Activated naive CD4-positive, alpha-beta T cell treated with anti-CD3 and anti-CD28 coated beads for 36 hours (primary cell): ENCODE measurements at regions of chr11 and their contacts with region 1.

Region 1: DNA sequence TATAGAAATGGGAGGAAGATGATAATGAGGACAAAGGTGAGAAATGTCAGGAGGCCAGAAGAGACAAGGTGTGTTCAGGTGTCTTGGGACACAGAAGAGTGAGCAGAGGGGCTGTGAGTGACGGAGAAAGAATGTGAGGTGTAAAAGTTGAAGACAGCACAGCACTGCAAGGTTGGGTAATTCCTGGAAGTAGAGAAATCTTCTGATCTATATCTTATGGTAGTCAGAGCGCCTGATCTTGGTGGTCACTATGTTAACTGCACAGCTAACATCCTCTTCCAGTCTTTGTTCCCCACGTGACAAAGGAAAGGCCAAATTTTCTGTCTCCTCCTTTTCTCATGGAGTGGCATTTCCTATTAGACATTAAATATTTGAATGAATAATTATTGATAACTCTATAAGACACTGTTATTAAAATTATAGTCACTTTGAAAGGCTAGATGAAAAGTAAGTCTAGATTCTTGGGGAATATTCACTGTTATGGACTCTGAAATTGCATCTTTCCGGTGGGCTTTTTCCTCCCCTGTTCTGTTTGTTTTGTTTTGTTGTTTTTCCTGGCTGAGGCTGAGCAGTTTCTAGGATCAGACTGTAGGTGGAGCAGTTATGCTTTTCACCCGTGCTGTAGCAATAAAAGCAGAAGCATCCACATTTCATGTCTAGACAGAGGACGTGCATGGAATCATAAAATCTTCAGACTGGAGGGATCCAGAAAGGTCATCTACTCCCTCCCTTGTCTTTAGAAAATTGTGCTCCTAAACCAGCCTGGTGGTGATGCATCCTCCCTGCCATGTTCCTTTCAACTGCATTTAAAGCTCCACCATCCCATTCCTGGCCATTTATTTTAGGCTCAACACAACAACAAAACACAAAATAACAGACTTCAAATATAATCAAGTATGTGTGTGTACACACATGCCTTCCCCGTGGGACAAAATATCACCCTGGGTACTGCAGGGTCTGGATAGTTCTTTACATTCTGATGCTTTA is 26.6 kb downstream of the SC5D start:
- DNase-seq: peak; percentile 40
- H3K4me3 Mint-ChIP-seq: no peak overlapping the region
- H3K27ac Mint-ChIP-seq: no peak overlapping the region
- H3K4me1 Mint-ChIP-seq: peaks cover 13% of the 10 kb centered on the region
- H3K27me3 Mint-ChIP-seq: no peaks in the 10 kb centered on the region

Region 2: DNA sequence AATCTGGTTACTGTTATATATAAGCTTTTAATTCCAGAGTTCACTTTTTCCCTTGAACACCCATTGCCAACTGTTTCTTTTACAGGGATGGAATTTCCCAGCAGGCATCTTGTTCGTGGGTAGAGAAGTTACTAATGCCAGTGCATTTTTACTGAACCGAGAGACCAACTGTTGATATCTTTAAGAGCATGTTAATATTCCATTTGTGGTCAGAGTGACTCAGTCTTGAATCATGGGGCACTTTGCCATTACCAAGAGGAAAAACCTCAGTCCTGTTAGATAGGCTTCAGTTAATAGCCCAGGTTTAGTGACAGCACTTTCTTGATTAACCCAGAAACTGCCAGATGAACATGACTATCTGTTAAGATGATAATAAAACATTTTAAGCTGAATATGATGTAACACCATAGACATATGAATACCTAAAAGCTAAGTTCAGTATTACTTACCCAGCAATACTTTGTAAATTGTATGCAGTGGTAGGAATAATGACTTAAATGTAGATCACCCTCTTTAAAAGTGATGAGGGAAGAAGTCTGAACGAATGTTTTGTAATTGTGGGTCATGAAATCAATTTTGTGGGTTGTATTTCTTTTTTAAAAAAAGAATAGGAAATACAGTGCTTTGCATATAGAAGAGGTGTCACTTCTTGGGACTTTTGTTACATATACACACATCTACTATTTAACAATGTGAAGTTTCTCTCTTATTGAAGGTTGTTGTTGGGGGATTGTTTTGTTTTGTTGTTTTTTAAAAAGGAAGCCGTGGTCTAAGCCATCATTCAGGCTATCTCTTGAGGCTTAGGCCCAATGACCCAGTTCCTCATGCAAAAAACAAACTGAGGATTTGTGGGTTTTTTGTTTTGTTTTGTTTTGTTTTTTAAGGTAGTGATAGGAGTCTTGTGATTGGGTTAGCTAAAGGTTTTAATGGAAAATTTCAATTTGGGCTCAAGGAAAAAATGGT is 886.8 kb before region 1 on chr11:
- CTCF ChIA-PET with region 1: no interaction called
- intact Hi-C with region 1: no loop called
- DNase-seq: peak; percentile 30
- H3K4me3 Mint-ChIP-seq: no peak overlapping the region
- H3K27ac Mint-ChIP-seq: peak overlapping the region; percentile 57
- H3K4me1 Mint-ChIP-seq: peaks cover 17% of the 10 kb centered on the region
- H3K27me3 Mint-ChIP-seq: no peaks in the 10 kb centered on the region

Region 3: GRCh38 chr11:120710354-120711131 is 608.6 kb before region 1 on chr11:
- CTCF ChIA-PET with region 1: no interaction called
- intact Hi-C with region 1: no loop called
- DNase-seq: no peak
- H3K4me3 Mint-ChIP-seq: no peak overlapping the region
- H3K27ac Mint-ChIP-seq: no peak overlapping the region
- H3K4me1 Mint-ChIP-seq: peaks cover 5% of the 10 kb centered on the region
- H3K27me3 Mint-ChIP-seq: peaks cover 3% of the 10 kb centered on the region

Region 4: GRCh38 chr11:121249039-121249663 is 70.0 kb before region 1 on chr11:
- CTCF ChIA-PET with region 1: no interaction called
- intact Hi-C with region 1: loop called (anchors 5 kb)
- DNase-seq: no peak
- H3K4me3 Mint-ChIP-seq: no peak overlapping the region
- H3K27ac Mint-ChIP-seq: no peak overlapping the region
- H3K4me1 Mint-ChIP-seq: no peaks in the 10 kb centered on the region
- H3K27me3 Mint-ChIP-seq: no peaks in the 10 kb centered on the region

Region 5: DNA sequence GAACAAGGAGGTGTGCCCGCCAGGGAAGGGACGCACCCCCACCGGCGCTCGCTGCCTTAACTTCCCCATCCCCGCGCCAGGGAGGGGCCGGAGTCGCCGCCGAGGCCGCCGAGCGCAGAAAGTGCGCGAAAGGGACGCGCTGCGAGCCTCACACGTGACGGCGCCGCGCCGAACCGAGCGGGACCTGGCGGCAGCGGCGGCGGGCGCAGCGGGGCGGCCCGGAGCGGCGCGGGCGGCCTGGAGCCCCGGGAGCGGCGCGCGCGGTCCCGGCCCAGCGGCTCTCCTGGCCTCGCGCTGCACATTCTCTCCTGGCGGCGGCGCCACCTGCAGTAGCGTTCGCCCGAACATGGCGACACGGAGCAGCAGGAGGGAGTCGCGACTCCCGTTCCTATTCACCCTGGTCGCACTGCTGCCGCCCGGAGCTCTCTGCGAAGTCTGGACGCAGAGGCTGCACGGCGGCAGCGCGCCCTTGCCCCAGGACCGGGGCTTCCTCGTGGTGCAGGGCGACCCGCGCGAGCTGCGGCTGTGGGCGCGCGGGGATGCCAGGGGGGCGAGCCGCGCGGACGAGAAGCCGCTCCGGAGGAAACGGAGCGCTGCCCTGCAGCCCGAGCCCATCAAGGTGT is 133.0 kb after region 1 on chr11 and contains the start of gene SORL1:
- CTCF ChIA-PET with region 1: interaction called, 5 read pairs
- intact Hi-C with region 1: loop called (anchors 1 kb)
- DNase-seq: peak; percentile 86
- H3K4me3 Mint-ChIP-seq: peak within 1 kb of the TSS; percentile 87
- H3K27ac Mint-ChIP-seq: peak within 1 kb of the TSS; percentile 92
- H3K4me1 Mint-ChIP-seq: peaks cover 81% of the 10 kb centered on the region
- H3K27me3 Mint-ChIP-seq: no peaks in the 10 kb centered on the region
- total RNA-seq, gene SORL1: 66.8 to 67.2 TPM

Region 6: DNA sequence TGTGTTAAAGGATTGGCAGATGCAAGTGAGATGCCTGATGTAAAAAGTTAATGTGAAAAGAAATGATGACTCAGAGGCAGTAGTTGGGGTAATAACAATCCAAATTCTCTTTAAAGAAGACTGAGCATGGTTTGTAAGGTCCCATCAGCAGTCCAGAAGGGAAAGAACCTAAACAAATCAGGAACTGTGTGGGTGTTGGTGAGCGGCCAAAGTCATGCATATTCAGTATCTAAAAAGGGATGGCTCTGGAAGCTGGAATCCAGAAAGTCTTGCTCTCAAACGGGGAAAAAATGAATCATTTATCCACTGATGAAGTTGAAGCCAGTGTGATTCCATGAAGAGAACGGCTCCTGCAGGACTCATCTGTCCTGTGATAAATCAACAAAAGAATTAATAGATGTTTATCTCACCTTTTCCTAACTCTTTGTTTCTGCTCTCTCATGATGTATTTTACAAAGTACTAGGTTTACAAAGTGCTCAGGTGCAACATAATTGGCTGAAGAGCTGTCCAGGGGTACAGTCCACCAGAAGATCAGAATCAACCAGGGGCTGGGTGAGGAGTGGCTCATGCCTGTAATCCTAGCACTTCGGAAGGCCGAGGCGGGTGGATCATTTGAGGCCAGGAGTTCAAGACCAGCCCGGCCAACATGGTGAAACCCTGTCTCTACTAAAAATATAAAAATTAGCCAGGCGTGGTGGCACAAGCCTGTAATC is 154.1 kb after region 1 on chr11:
- CTCF ChIA-PET with region 1: no interaction called
- intact Hi-C with region 1: no loop called
- DNase-seq: no peak
- H3K4me3 Mint-ChIP-seq: no peak overlapping the region
- H3K27ac Mint-ChIP-seq: peak overlapping the region; percentile 77
- H3K4me1 Mint-ChIP-seq: peaks cover 87% of the 10 kb centered on the region
- H3K27me3 Mint-ChIP-seq: no peaks in the 10 kb centered on the region

Region 7: DNA sequence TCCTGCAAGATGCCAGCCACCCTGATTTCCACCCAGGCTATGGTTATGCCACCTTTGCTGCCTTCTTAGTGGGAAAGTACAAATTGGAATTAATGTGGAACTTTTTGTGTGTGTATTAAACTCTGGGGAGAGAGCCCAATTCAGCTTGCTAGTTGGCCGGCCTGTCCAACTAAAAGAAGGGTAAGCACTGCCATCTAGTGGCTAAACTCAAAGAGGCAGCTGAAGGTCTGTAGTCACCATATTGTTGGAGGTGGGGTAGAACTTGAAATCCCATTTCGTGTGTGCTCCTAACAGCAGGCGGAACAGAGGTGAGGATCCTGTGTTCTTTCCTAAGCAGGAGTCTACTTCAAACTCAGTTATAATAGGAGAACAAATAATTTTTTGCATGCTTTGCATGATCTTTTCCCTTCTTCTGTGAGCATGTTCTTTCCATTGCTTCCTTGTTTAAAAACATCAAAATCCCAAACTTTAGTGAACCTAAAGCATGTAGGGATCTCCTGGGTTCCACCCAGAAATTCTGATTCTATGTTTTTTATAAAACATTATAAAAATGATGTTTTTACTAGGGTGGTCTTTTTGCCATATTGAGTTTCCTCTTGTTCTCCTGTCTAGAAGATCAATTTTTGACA is 272.4 kb after region 1 on chr11:
- CTCF ChIA-PET with region 1: interaction called, 15 read pairs
- intact Hi-C with region 1: loop called (anchors 1 kb)
- DNase-seq: peak; percentile 87
- H3K4me3 Mint-ChIP-seq: no peak overlapping the region
- H3K27ac Mint-ChIP-seq: no peak overlapping the region
- H3K4me1 Mint-ChIP-seq: peaks cover 14% of the 10 kb centered on the region
- H3K27me3 Mint-ChIP-seq: no peaks in the 10 kb centered on the region

Region 8: DNA sequence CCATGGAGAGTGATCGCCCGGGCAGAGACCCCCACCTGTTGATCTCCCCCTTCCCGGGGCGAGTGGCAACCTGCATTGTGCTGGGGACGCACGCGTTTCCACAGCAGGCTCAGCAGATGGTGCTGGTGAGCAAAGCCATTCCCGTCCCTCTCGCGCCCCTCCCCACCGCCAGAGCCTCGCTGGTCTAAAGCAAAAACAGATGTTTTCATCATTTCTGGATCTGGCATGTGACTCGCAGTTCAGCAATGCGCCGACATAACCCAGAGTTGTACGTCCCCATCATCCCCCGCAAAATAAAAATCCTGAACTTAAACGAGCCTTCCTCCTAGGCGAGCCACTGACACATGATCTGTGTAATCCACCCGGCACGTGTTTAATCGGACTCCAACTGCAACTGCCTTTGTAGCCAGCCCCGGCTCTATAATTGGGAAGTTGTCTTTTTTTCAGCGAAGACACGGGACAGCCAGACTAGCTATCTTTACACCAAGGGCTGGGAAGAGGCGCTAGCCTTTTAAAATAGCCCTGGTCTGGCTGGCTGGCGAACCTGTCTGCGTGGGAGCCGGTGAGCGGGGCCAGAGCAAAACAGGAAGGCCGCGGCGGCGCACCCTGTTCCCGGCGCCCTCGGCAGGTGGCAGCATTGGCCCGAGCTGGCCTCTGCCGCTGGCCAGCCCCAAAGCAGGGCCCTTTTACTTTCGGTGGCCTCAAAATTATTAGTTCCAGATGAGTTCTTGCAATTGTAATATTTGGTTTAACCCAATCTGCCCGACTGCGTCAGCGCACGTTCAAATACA is 336.6 kb after region 1 on chr11:
- CTCF ChIA-PET with region 1: interaction called, 6 read pairs
- intact Hi-C with region 1: loop called (anchors 1 kb)
- DNase-seq: peak; percentile 82
- H3K4me3 Mint-ChIP-seq: peak overlapping the region; percentile 74
- H3K27ac Mint-ChIP-seq: peak overlapping the region; percentile 26
- H3K4me1 Mint-ChIP-seq: peaks cover 22% of the 10 kb centered on the region
- H3K27me3 Mint-ChIP-seq: peaks cover 6% of the 10 kb centered on the region

Region 9: DNA sequence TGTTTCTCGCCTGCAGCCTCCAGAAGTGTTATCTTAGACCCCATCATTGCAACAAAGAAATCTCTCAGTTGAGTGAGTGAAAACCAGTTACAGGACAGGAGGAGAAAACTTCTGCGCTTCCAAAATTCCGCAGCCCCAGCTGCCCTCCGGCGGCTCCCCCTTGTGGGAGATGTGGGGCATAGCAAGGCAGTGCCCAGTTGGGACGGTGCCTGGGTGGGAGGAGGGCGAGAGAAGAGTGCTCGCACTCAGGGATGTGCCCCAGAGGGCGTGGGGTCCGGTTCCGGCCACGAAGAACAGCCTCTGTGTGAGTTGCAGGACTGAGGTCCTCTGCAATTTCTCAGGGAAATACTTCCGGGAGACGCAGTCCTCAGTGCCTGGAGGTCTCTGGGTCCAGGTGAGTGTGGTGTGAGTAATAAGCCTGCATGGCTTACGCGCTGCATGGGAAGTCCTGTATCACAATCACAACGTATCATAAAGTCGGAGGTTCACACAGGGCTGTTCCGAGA is 883.9 kb after region 1 on chr11:
- CTCF ChIA-PET with region 1: no interaction called
- intact Hi-C with region 1: loop called (anchors 1 kb)
- DNase-seq: peak; percentile 60
- H3K4me3 Mint-ChIP-seq: no peak overlapping the region
- H3K27ac Mint-ChIP-seq: no peak overlapping the region
- H3K4me1 Mint-ChIP-seq: no peaks in the 10 kb centered on the region
- H3K27me3 Mint-ChIP-seq: peaks cover 24% of the 10 kb centered on the region